ENCODE measurements at regions of chr20 and their contacts with region 1.

Region 1: DNA sequence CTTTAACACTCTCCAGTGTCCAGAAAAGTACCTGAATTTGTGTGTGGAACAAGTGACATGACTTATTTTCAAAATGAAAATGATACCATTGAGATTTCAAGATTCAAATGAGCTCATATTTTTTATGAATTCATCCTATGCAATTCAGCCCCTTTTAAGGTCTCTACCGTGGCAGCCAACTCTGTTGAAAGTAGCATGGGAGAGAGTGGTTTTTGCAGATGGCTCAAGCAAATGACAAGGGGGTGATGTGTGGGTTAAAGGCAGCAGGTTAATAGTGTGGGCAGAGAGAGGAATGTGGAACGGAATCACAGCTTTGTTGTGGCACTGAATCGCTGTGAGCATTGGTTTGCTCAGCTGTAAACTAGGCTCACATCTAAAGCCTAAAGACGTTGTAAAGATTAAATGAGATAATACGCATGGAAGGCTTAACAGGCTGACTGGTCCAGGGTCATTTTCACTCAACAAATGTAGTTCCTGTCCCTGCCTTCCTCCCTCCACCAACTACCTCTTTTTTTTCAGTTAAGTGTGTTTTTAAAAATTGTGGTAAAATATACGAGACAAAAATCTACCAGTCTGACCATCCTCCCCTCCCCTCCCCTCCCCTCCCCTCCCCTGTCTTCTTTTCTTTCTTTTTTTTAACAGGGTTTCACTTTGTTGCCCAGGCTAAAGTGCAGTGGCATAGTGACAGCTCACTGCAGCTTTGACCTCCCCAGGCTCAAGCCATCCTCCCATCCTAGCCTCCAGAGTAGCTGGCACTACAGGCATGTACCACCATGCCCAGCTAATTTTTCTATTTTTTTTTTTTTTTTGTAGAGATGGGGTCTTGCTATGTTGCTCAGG is 114.7 kb upstream of the ZNF217 start:
- DNase-seq: peak; percentile 84
- H3K4me3 Mint-ChIP-seq: peak overlapping the region; percentile 57
- H3K27ac Mint-ChIP-seq: peak overlapping the region; percentile 93
- H3K4me1 Mint-ChIP-seq: peaks cover 52% of the 10 kb centered on the region
- H3K27me3 Mint-ChIP-seq: no peaks in the 10 kb centered on the region

Region 2: DNA sequence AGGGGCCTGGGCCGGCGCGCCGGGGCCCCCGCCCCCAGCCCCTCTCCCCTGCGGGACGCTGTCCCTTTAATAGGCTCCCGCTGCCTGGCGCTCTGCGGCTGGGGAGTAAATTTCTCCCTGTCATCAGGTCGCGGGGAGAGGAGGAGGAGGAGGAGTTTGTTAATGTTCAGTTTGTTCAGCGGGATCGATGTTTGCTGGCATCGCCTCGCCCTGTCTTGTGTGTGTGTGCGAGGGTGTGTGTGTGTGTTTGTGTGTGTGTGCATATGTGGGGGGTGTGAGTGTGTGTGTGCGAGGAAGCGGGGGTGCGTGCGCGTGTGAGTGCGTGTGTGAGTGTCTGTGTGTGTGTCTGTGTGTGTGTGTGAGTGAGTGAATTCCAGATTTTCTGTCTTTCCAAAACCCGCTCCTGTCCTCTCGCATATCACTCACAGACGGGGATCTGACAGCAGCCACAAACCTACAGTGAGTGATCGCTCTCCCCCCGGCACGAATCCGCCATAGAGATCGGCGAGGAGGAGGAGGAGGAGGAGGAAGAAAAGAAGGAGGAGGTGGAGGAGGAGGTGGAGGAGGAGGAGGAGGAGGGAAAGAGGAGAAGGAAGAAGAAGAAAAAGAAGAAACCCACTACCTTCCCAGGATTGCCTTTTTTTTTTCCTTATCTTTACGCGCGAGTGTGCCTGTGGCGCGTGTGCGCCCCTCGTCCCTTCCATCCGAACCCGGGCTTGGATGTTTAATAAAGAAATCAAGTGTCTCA is 736.0 kb before region 1 on chr20 and contains the start of gene TSHZ2:
- intact Hi-C with region 1: loop called (anchors 10 kb)
- DNase-seq: peak; percentile 87
- H3K4me3 Mint-ChIP-seq: peak within 1 kb of the TSS; percentile 98
- H3K27ac Mint-ChIP-seq: peak within 1 kb of the TSS; percentile 98
- H3K4me1 Mint-ChIP-seq: peaks cover 29% of the 10 kb centered on the region
- H3K27me3 Mint-ChIP-seq: peaks cover 10% of the 10 kb centered on the region
- total RNA-seq, gene TSHZ2: 28.0 and 29.5 TPM in 2 replicates

Region 3: GRCh38 chr20:53623454-53624211 is 84.7 kb before region 1 on chr20:
- intact Hi-C with region 1: loop called (anchors 1 kb)
- DNase-seq: peak; percentile 81
- H3K4me3 Mint-ChIP-seq: peak overlapping the region; percentile 81
- H3K27ac Mint-ChIP-seq: peak overlapping the region; percentile 98
- H3K4me1 Mint-ChIP-seq: peaks cover 36% of the 10 kb centered on the region
- H3K27me3 Mint-ChIP-seq: no peaks in the 10 kb centered on the region

Region 4: DNA sequence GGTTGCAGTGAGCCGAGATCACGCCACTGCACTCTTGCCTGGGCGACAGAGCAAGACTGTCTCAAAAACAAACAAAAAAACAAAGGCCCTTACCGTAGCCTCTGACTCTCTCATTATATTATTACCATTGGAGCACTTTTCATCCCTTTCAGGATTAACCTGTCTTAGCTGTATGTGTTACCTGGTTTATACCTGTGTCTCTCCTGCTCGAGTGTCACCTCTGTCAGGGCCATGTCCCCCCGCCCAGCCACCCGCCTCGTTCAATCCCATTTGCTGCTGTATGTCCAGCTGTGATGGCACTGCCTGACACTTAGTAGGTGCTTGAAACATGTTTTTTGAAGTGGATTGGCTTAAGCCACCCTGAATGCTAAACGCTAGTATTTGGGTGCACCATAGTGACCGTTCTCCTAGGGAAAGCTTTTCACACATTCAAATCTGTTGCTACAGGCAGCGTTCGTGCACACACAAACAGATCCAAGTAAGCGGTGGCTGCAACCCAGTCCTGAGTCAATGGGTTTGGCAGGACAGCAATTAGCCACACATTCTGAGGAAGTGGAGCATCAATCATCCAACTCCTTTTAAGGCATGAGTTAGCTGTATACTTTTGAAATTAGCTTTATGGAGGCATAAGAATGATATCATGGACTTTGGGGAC is 15.8 kb before region 1 on chr20:
- intact Hi-C with region 1: loop called (anchors 2 kb)
- DNase-seq: peak; percentile 64
- H3K4me3 Mint-ChIP-seq: peak overlapping the region; percentile 56
- H3K27ac Mint-ChIP-seq: peak overlapping the region; percentile 46
- H3K4me1 Mint-ChIP-seq: peaks cover 37% of the 10 kb centered on the region
- H3K27me3 Mint-ChIP-seq: no peaks in the 10 kb centered on the region

Region 5: DNA sequence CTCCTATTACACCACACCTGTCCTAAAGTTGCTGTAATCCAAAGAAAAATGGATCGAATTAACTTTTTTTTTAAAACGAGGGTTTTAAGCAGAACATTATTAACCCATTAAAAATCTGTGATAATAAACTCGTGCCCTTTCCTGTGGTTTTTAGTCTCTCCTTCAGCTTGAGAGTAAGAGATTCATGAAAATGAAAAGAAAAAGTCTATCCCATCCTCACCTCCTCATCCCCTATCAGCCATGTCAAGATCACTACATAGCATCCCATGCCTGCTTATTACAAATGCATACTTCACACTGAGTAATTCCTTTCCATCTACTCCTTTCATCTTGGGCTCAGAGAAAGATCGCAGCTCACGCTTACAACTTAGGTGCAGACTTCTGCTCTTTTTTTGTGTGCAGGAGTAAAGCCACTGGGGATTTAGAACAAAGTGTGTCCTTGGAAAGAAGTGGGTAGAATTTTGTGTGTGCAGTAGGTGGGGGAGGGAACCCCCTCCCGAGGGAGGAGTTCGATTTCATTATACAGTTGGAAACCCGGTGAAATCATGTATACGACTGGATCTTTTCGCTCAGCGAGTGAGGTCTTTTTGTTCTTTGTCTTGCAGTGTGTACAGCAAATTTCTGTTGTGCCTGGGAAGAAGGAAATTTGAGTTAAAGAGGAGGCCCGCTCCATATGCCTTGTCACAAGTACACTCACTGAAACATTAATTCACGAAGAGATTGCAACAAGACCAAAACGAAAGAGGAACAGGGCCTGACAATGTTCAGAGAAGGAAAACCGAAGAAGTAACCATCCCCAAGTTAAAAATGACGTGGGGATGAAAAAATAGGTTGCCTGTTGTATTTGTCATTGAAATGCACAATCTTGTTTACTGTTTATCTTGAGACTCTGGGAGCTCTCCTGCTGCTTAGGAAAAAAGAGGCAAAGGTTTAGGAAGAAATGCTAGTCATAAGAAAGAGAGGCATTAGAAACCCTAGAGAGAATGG is 31.7 kb after region 1 on chr20:
- intact Hi-C with region 1: loop called (anchors 1 kb)
- DNase-seq: peak; percentile 75
- H3K4me3 Mint-ChIP-seq: peak overlapping the region; percentile 82
- H3K27ac Mint-ChIP-seq: peak overlapping the region; percentile 94
- H3K4me1 Mint-ChIP-seq: peaks cover 51% of the 10 kb centered on the region
- H3K27me3 Mint-ChIP-seq: no peaks in the 10 kb centered on the region

Region 6: GRCh38 chr20:53869466-53870258 is 161.3 kb after region 1 on chr20:
- intact Hi-C with region 1: loop called (anchors 1 kb)
- DNase-seq: peak; percentile 92
- H3K4me3 Mint-ChIP-seq: peak overlapping the region; percentile 57
- H3K27ac Mint-ChIP-seq: peak overlapping the region; percentile 92
- H3K4me1 Mint-ChIP-seq: peaks cover 63% of the 10 kb centered on the region
- H3K27me3 Mint-ChIP-seq: no peaks in the 10 kb centered on the region

Region 7: GRCh38 chr20:53949319-53949889 is 241.1 kb after region 1 on chr20:
- intact Hi-C with region 1: loop called (anchors 1 kb)
- DNase-seq: peak; percentile 94
- H3K4me3 Mint-ChIP-seq: peak overlapping the region; percentile 80
- H3K27ac Mint-ChIP-seq: peak overlapping the region; percentile 90
- H3K4me1 Mint-ChIP-seq: peaks cover 34% of the 10 kb centered on the region
- H3K27me3 Mint-ChIP-seq: peaks cover 4% of the 10 kb centered on the region

Region 8: GRCh38 chr20:54067606-54068174 is 359.3 kb after region 1 on chr20:
- intact Hi-C with region 1: no loop called
- DNase-seq: no peak
- H3K4me3 Mint-ChIP-seq: no peak overlapping the region
- H3K27ac Mint-ChIP-seq: no peak overlapping the region
- H3K4me1 Mint-ChIP-seq: peaks cover 3% of the 10 kb centered on the region
- H3K27me3 Mint-ChIP-seq: peaks cover 10% of the 10 kb centered on the region

Measured in activated CD4-positive, alpha-beta T cell treated with anti-CD3 and anti-CD28 coated beads, Interleukin-2, amount 10 ng/mL, durations not matched to agents 24 days and 14 days (primary cell).